Activated CD4-positive, alpha-beta memory T cell treated with anti-CD3 and anti-CD28 coated beads for 36 hours (primary cell): ENCODE measurements at regions of chr3 and their contacts with region 1.

Region 1: DNA sequence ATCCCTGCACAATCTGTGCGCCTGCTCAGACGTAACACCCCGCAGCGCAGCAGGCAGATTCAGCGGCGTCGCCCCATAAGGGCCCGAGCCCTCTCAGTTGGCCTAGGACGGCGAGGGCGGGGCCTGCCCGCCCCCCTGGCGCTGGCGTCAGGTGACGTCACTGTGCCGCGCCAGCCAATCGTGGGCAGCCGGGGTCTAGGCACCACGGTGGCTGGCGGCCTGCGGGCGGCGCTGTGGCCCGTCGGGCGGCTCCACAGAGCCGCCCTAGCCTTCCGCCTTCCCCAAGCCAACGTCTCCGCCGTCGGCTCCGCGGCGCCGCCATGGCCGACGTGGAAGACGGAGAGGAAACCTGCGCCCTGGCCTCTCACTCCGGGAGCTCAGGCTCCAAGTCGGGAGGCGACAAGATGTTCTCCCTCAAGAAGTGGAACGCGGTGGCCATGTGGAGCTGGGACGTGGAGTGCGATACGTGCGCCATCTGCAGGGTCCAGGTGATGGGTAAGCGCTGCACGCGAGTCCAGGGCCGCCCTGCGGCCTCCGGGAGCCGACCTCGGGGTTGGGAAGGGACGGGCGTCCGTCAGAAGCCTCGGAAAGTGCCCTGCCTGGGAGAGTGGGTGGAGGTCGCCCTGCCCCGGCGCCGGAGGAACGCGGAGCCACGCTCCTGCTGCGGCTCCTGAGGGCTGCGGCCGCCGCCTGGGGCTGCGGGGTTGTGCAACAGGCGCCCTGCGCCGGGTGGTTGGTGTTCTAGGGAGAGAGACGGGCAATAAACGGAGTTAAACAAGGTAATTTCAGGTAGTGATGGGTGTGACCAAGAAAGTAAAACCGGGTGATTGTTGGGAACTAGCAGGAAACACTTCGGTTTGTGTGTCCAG is at the start of gene RNF7:
- DNase-seq: peak; percentile 98
- H3K4me3 Mint-ChIP-seq: peak within 1 kb of the TSS; percentile 100
- H3K27ac Mint-ChIP-seq: peak within 1 kb of the TSS; percentile 99
- H3K4me1 Mint-ChIP-seq: peaks cover 33% of the 10 kb centered on the region
- H3K27me3 Mint-ChIP-seq: no peaks in the 10 kb centered on the region
- total RNA-seq, gene RNF7: 54.0 to 58.9 TPM

Region 2: GRCh38 chr3:141370065-141370533 is 368.2 kb before region 1 on chr3:
- CTCF ChIA-PET with region 1: no interaction called
- POLR2A ChIA-PET with region 1: no interaction called
- intact Hi-C with region 1: loop called (anchors 5 kb)
- DNase-seq: peak; percentile 68
- H3K4me3 Mint-ChIP-seq: no peak overlapping the region
- H3K27ac Mint-ChIP-seq: peak overlapping the region; percentile 40
- H3K4me1 Mint-ChIP-seq: peaks cover 58% of the 10 kb centered on the region
- H3K27me3 Mint-ChIP-seq: no peaks in the 10 kb centered on the region

Region 3: GRCh38 chr3:141796081-141796888 is 58.0 kb after region 1 on chr3:
- CTCF ChIA-PET with region 1: interaction called, 21 read pairs
- POLR2A ChIA-PET with region 1: interaction called, 21 read pairs
- intact Hi-C with region 1: loop called (anchors 1 kb)
- DNase-seq: peak; percentile 88
- H3K4me3 Mint-ChIP-seq: peak overlapping the region; percentile 84
- H3K27ac Mint-ChIP-seq: peak overlapping the region; percentile 94
- H3K4me1 Mint-ChIP-seq: peaks cover 48% of the 10 kb centered on the region
- H3K27me3 Mint-ChIP-seq: no peaks in the 10 kb centered on the region

Region 4: GRCh38 chr3:141894524-141895178 is 156.4 kb after region 1 on chr3:
- CTCF ChIA-PET with region 1: interaction called, 3 read pairs
- POLR2A ChIA-PET with region 1: no interaction called
- intact Hi-C with region 1: loop called (anchors 5 kb)
- DNase-seq: no peak
- H3K4me3 Mint-ChIP-seq: no peak overlapping the region
- H3K27ac Mint-ChIP-seq: no peak overlapping the region
- H3K4me1 Mint-ChIP-seq: peaks cover 44% of the 10 kb centered on the region
- H3K27me3 Mint-ChIP-seq: no peaks in the 10 kb centered on the region

Region 5: DNA sequence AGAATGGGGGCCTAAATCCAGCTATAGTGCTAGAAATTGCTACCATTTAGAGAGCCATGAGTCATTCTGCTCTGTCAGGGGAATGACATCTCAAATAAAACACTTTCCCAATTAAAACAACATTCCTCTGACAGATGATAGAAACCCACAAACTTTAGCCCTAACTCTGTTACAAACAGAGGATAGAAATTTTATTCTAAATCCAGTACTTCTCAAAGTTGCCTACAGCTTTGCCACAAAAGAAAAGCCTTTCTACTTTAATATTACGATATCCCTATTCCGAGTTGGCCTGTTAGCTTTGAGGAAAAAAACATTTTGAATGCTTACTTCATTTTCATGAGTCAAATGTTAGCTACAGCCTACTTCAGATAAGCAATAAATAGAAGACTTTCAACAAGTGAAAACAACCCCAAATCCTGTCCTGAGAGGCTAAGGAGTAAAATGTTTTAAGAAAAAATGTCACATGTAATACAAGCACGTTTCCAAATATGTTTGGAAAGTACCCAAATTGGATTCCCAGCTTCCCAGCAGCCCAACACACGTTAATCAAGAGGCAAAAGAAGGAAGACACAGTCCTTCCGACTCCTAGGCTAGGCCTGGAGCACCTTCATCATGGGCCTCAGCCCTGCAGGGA is 221.8 kb after region 1 on chr3:
- CTCF ChIA-PET with region 1: no interaction called
- POLR2A ChIA-PET with region 1: no interaction called
- intact Hi-C with region 1: loop called (anchors 2 kb)
- DNase-seq: no peak
- H3K4me3 Mint-ChIP-seq: no peak overlapping the region
- H3K27ac Mint-ChIP-seq: no peak overlapping the region
- H3K4me1 Mint-ChIP-seq: peaks cover 3% of the 10 kb centered on the region
- H3K27me3 Mint-ChIP-seq: no peaks in the 10 kb centered on the region

Region 6: GRCh38 chr3:142226484-142226883 is 488.2 kb after region 1 on chr3:
- CTCF ChIA-PET with region 1: no interaction called
- POLR2A ChIA-PET with region 1: no interaction called
- intact Hi-C with region 1: loop called (anchors 2 kb)
- DNase-seq: no peak
- H3K4me3 Mint-ChIP-seq: peak overlapping the region; percentile 29
- H3K27ac Mint-ChIP-seq: no peak overlapping the region
- H3K4me1 Mint-ChIP-seq: peaks cover 12% of the 10 kb centered on the region
- H3K27me3 Mint-ChIP-seq: no peaks in the 10 kb centered on the region